MCF 10A (cell line): ENCODE measurements at regions of chr1 and their contacts with region 1.

Region 1: DNA sequence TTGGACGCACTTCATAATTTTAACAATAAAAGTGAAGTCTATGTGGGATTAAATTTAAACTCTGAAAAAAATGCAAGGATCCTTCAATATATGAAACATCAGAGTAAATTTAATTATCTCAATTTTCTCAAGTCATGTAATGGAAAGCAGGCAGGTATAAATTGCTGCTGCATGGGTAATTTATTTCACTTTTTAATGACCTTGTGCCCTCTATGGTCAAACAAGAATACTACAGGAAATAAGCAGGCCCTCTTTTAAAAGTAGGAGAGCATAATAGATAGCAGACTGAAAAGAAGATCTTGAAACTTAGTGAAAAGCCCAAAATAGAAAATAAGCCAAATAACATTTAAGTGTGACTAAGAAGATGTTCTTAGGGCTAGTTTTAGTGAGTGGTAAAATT is 22.9 kb downstream of the BCAS2 start:
- DNase-seq: peak; percentile 24
- H3K4me3 Mint-ChIP-seq: no peak overlapping the region
- H3K27ac Mint-ChIP-seq: no peak overlapping the region
- H3K4me1 Mint-ChIP-seq: no peaks in the 10 kb centered on the region
- H3K27me3 Mint-ChIP-seq: no peaks in the 10 kb centered on the region
- CTCF ChIP-seq: peak; percentile 46

Region 2: DNA sequence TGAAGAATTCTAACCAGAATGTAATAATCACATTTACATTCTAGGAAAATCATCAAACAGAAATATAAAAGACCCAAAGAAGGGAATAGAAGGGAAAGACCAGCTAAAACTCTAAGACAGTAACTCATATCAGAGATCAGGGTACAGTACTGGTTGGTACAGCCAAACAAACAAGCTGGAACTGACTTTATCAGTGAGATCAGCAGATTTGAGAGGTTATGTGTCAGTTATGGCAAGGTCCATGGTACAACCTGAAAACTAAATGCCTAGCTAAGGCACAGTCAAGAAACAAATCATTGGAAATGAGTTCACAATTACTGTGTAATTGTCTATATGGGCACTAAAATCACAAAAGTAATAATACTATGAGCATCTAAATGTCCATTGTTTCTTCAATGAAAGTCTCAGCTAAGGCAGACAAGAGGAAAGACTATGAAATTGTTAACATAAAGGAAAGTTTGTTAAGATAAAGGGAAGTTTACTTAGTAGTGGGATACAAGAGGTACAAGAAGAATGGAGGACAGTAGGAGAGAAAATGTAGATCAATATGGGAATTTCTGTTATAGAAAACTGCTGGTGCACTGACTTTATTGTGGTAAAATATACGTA is 123.3 kb before region 1 on chr1:
- CTCF ChIA-PET with region 1: no interaction called
- POLR2A ChIA-PET with region 1: no interaction called
- intact Hi-C with region 1: loop called (anchors 10 kb)
- DNase-seq: no peak
- H3K4me3 Mint-ChIP-seq: no peak overlapping the region
- H3K27ac Mint-ChIP-seq: peak overlapping the region; percentile 73
- H3K4me1 Mint-ChIP-seq: peaks cover 15% of the 10 kb centered on the region
- H3K27me3 Mint-ChIP-seq: no peaks in the 10 kb centered on the region
- CTCF ChIP-seq: no peak